ENCODE measurements at regions of chr1 and their contacts with region 1.

Region 1: DNA sequence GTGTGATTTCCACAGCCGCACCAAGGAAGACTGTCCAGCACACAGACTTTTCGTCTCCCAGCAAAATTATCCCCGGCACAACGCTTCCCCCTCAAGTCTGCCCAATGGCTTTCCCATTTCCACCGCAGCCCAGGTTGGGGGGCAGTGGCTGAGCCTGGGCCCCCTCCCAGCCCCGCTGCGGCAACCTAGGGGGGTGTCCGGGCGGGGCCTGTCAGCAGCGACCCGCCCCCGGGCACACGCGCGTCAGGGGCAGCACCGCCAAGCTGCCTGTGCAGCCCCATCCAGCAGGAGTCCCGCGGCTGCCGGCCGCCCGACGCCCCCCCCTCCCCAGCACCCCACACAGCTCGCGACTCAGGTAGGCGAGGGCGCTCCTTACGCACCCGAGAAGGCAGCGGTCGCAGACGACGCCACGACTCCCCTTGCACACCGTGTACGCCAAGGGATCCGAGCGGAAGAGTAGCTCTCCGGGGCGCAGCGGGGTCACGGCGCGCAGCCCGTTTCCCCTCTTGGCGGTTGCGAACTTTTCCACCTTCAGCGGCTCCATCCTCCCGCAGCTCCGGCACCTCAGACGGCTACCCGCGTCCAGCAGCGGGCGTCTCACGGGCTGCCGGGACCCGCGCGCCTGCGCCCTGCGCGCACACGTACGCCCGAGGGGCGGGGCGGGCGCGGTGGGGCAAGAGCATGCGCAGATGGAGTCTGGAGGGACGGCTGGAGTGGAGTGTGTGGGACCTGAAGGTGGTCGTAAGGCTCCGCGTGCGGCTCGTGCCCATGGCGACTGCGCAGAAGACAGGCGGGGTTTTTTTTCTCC is at the start of gene SMYD3:
- DNase-seq: peak; percentile 73
- H3K4me3 ChIP-seq: peak within 1 kb of the TSS; percentile 59 to 95 (median 77)
- H3K27ac ChIP-seq: peak within 1 kb of the TSS; percentile 1
- H3K4me1 ChIP-seq: peaks cover 26% of the 10 kb centered on the region
- H3K27me3 ChIP-seq: no peaks in the 10 kb centered on the region
- CTCF ChIP-seq: no peak
- total RNA-seq, gene SMYD3: 16.5 to 23.5 TPM

Region 2: DNA sequence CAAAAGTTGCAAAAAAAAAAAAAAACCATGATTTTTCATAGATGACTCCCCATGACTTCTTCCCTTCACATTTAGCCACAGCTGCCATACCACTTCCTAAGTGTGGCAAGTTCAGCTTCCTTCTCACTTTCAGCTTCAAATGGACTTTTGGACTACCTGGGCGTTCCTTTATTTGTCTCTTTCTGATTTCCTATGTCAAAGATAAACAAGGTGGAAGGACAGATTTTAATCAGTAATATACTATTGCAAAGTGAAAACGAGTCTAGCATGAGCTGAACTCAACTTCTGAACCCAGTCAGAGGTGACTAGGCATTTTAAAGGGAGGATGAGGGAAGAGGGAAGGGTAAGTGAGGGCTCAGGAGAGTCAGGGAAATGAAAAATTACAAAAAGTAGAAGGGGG is 203.0 kb after region 1 on chr1:
- CTCF ChIA-PET with region 1: interaction called, 19 read pairs
- dilution Hi-C with region 1: no loop called
- in situ Hi-C with region 1: no loop called
- intact Hi-C with region 1: no loop called
- DNase-seq: no peak
- H3K4me3 ChIP-seq: no peak overlapping the region
- H3K27ac ChIP-seq: no peak overlapping the region
- H3K4me1 ChIP-seq: peaks cover 4% of the 10 kb centered on the region
- H3K27me3 ChIP-seq: no peaks in the 10 kb centered on the region
- CTCF ChIP-seq: no peak

Measured in mammary epithelial cell (primary cell).